Esophagus muscularis mucosa (tissue), 4 donors: ENCODE measurements at regions of chr20 and their contacts with region 1.

Region 1: DNA sequence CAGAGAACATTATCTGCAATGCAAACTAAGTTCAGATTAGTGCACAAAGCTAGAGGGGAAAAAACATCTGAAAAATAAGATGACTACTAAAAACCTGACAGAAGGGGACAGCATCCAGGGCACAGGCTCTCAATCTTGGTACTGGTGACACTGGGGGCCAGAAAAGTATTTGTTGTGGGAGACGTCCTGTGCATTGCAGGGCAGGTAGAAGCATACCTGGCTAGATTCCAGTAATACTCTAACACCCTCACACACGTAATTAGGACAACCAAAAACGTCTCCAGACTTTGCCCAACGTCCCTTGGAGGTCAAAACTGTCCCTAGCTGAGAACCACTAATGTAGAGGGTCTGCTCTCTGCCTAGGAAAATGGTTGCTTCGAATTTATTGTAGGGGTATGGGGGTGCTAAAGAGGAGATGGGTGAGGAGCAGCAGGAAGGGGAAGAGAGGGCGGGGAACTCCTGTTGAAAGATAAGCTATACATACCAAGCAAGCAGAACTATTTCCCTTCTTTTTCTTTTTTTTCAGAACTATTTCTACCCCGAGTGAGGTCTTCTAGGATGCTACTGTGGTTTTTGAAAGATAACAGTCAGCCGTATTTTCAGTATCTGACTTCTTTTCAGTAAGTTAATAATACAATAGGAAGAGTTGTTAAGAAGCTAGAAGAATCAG is 53.6 kb downstream of the ZMYND8 start:
- DNase-seq: no peak
- H3K4me3 ChIP-seq: no peak overlapping the region
- H3K27ac ChIP-seq: peak overlapping the region; percentile 61 to 69 (median 66)
- H3K4me1 ChIP-seq: peaks cover 24 to 44% (median 43%) of the 10 kb centered on the region in 4 donors
- H3K27me3 ChIP-seq: no peaks in the 10 kb centered on the region
- CTCF ChIP-seq: no peak
- EP300 ChIP-seq: no peak
- POLR2A ChIP-seq: no peak

Region 2: GRCh38 chr20:47278563-47279348 is 24.1 kb before region 1 on chr20:
- intact Hi-C with region 1: loop called (anchors 2 kb)
- DNase-seq: no peak
- H3K4me3 ChIP-seq: no peak overlapping the region
- H3K27ac ChIP-seq: peak overlapping the region; percentile 59 to 83 (median 78)
- H3K4me1 ChIP-seq: peaks cover 34 to 51% (median 45%) of the 10 kb centered on the region in 4 donors
- H3K27me3 ChIP-seq: no peaks in the 10 kb centered on the region
- CTCF ChIP-seq: no peak
- EP300 ChIP-seq: no peak
- POLR2A ChIP-seq: no peak

Region 3: GRCh38 chr20:47704755-47705493 is 402.0 kb after region 1 on chr20:
- intact Hi-C with region 1: no loop called
- DNase-seq: no peak
- H3K4me3 ChIP-seq: no peak overlapping the region
- H3K27ac ChIP-seq: peak overlapping the region; percentile 59 to 83 (median 69)
- H3K4me1 ChIP-seq: peaks cover 20 to 36% (median 34%) of the 10 kb centered on the region in 4 donors
- H3K27me3 ChIP-seq: no peaks in the 10 kb centered on the region
- CTCF ChIP-seq: no peak
- EP300 ChIP-seq: no peak
- POLR2A ChIP-seq: no peak